ENCODE measurements at regions of chr9 and their contacts with region 1.

Region 1: GRCh38 chr9:96661711-96662110 is 6.6 kb upstream of the PRXL2C start:
- DNase-seq: no peak
- H3K4me3 ChIP-seq: no peak overlapping the region
- H3K27ac ChIP-seq: no peak overlapping the region
- H3K4me1 ChIP-seq: peaks cover 0 to 2% (median 0%) of the 10 kb centered on the region in 4 donors
- H3K27me3 ChIP-seq: no peaks in the 10 kb centered on the region
- CTCF ChIP-seq: no peak
- EP300 ChIP-seq: no peak
- POLR2A ChIP-seq: no peak

Region 2: DNA sequence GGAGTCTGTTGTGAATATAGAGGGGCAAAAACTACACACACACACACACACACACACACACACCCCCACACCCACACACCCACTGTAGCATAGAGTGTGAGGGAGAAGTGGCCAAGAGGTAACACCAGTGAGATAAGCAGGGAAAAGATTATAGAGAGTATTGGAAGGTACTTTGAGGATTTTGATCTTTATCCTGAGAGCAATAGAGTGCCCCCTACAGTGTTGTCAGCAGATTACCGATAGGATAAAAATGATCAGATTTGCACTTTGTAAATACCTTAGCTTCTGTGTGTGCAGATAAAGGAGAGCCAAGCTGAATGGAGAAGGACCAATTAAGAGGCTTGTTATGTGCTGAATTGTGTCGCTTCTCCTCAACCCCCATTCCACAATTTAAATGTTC is 753.9 kb before region 1 on chr9:
- in situ Hi-C with region 1: no loop called
- intact Hi-C with region 1: no loop called
- DNase-seq: no peak
- H3K4me3 ChIP-seq: no peak overlapping the region
- H3K27ac ChIP-seq: no peak overlapping the region
- H3K4me1 ChIP-seq: no peaks in the 10 kb centered on the region
- H3K27me3 ChIP-seq: no peaks in the 10 kb centered on the region
- CTCF ChIP-seq: peak in 1 of 5 experiments; percentile 2
- EP300 ChIP-seq: no peak
- POLR2A ChIP-seq: no peak

Region 3: GRCh38 chr9:96566498-96567207 is 95.1 kb before region 1 on chr9:
- in situ Hi-C with region 1: loop called in 1 of 4 experiments (anchors 10 kb)
- intact Hi-C with region 1: no loop called
- DNase-seq: peak; percentile 90
- H3K4me3 ChIP-seq: peak overlapping the region; percentile 75 to 83 (median 82)
- H3K27ac ChIP-seq: peak overlapping the region; percentile 95 to 97 (median 97)
- H3K4me1 ChIP-seq: peaks cover 0 to 34% (median 14%) of the 10 kb centered on the region in 4 donors
- H3K27me3 ChIP-seq: no peaks in the 10 kb centered on the region
- CTCF ChIP-seq: peak; percentile 60 to 85 (median 71)
- EP300 ChIP-seq: no peak
- POLR2A ChIP-seq: peak; percentile 66

Region 4: DNA sequence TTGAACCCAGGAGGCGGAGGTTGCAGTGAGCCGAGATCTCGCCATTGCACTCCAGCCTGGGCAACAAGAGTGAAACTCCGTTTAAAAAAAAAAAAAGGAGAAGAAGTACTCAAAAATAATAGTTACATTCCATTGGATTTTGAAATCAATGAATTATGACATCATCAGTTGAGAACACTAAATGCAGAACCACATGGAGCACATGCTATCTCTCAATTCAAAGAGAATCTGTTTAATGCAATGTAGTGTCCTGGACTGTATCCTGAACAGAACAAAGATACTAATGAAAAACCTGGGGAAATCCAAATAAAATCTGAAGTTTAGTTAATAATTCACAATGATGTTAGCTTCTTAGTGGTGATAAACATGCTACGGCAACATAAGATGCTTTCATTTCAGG is 62.4 kb before region 1 on chr9:
- in situ Hi-C with region 1: no loop called
- intact Hi-C with region 1: no loop called
- DNase-seq: no peak
- H3K4me3 ChIP-seq: no peak overlapping the region
- H3K27ac ChIP-seq: no peak overlapping the region
- H3K4me1 ChIP-seq: no peaks in the 10 kb centered on the region
- H3K27me3 ChIP-seq: no peaks in the 10 kb centered on the region
- CTCF ChIP-seq: no peak
- EP300 ChIP-seq: no peak
- POLR2A ChIP-seq: no peak

Region 5: GRCh38 chr9:96721731-96722429 is 60.2 kb after region 1 on chr9:
- in situ Hi-C with region 1: no loop called
- intact Hi-C with region 1: no loop called
- DNase-seq: no peak
- H3K4me3 ChIP-seq: no peak overlapping the region
- H3K27ac ChIP-seq: no peak overlapping the region
- H3K4me1 ChIP-seq: peaks cover 5 to 13% (median 8%) of the 10 kb centered on the region in 4 donors
- H3K27me3 ChIP-seq: peaks cover 18% of the 10 kb centered on the region
- CTCF ChIP-seq: no peak
- EP300 ChIP-seq: no peak
- POLR2A ChIP-seq: no peak

Region 6: DNA sequence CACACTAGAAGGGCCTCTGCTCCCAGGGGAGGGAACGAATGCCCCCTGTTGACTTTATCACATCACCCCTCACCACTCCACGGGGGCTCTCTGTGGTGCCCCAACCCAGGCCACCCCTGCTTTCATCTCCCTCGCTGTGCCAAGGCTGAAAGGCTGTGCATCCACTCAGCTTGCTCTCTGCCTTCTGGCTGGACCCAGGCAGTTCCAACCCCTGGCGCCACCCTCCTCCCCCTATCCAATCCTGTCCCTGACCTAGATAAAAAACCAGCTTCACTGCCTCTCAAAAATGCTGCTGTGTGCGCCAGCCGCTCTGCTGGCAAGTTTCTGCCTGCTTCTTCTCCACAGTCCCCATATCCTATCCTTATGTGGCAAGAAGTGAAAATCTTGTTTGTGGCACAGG is 1553.1 kb after region 1 on chr9:
- in situ Hi-C with region 1: no loop called
- intact Hi-C with region 1: loop called (anchors 5 kb)
- DNase-seq: no peak
- H3K4me3 ChIP-seq: no peak overlapping the region
- H3K27ac ChIP-seq: no peak overlapping the region
- H3K4me1 ChIP-seq: peaks cover 0 to 7% (median 0%) of the 10 kb centered on the region in 4 donors
- H3K27me3 ChIP-seq: no peaks in the 10 kb centered on the region
- CTCF ChIP-seq: no peak
- EP300 ChIP-seq: no peak
- POLR2A ChIP-seq: no peak

Measured in transverse colon (tissue), 4 donors.